Dendritic cell treated with granulocyte-macrophage colony-stimulating factor and Interleukin-4, amounts not matched to agents 40 ng/mL and 50 ng/mL, for 4 days (primary cell): ENCODE measurements at regions of chr5 and their contacts with region 1.

Region 1: DNA sequence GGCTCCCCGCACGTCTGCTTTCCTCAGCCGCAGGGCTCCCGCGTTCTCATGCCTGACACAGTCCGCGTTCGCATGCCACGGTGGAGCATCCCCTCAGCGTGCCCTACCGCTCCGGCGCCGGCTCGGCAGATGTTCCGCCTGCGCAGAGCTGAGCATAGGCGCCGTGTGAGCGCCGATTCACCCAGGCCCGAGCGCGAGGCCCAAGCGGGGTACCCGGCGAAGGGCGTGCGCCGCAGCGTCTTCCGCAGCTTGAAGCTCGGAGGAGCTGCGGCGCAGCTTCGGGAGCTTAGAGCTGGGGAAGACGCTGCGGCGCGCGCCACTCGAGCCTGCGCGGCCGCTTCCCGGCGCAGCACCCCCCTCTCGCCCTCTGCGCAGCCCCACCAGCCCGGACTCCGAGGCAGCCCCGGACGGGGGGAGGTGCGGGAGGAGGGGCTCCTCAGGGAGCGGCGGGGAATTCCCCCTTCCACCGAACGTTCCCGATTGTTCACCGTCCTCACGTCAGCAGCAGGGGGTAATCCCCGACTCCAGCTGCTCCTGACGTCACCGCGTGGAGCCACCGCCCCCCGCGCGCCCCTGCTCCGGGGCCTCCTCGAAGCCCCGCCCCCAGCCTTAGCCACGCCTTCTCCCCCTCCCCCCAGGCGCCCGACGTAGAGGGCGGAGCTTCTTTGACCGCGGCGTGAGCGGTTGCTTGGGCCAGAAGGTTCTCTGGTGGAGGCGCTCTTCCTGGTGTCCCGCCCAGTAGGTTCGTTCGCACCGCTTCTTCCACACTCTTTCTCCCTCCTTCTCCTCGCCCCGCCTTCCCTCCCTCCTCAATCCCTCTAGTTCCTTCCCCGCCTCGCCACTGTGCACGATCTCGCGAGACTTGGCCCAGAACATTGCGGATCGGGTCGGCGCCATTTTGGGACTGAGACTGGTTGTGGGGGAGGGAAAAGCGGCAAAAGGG is at the start of gene GPBP1:
- H3K4me3 Mint-ChIP-seq: peak within 1 kb of the TSS; percentile 96
- H3K27ac Mint-ChIP-seq: peak within 1 kb of the TSS; percentile 100
- H3K4me1 Mint-ChIP-seq: peaks cover 39% of the 10 kb centered on the region
- H3K27me3 Mint-ChIP-seq: no peaks in the 10 kb centered on the region

Region 2: DNA sequence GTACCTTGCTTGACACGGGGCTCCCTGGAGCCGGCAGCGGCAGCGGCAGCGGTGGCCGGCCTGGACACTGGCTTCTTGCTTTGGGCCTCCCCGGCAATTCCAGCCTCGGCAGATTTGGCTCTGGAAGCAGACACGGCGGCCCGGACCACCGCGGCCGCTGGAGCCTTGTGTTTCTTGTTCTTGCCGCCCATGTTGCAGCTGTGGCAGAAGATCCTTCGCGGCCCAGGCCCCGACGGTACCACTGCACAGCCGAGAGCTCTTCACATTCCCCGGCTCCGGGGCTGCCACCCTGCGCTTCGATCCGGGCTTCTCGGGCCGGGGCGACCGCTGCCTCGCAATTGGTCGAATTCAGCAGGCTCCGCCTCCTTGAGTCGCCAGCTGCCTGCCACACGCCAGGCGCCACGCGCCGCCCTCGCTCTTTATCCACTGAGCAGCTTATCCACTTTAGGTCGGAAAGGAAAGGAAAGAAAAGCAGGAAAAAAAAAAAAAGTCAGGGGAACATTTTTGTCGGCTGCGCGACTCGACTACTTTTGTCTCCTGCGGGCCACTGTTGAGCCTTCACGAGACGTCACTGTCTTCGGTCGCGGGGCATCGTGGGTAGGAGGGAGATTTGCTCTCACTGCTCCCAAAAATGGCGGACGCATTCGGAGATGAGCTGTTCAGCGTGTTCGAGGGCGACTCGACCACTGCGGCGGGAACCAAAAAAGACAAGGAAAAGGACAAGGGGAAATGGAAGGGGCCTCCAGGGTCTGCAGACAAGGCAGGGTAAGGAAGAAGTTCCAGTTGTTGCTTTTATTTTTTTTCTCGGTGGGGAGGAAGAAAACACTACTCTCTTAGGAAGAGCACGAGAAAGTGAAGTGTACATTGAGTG is 1865.8 kb before region 1 on chr5 and contains the starts of genes DHX29 and MTREX:
- intact Hi-C with region 1: loop called (anchors 10 kb)
- H3K4me3 Mint-ChIP-seq: no peak within 1 kb of the TSS
- H3K27ac Mint-ChIP-seq: no peak within 1 kb of the TSS
- H3K4me1 Mint-ChIP-seq: peaks cover 28% of the 10 kb centered on the region
- H3K27me3 Mint-ChIP-seq: no peaks in the 10 kb centered on the region

Region 3: GRCh38 chr5:56909294-56910209 is 263.9 kb before region 1 on chr5 and contains the start of gene SETD9:
- intact Hi-C with region 1: loop called (anchors 1 kb)
- H3K4me3 Mint-ChIP-seq: peak within 1 kb of the TSS; percentile 94
- H3K27ac Mint-ChIP-seq: peak within 1 kb of the TSS; percentile 97
- H3K4me1 Mint-ChIP-seq: peaks cover 22% of the 10 kb centered on the region
- H3K27me3 Mint-ChIP-seq: no peaks in the 10 kb centered on the region

Region 4: GRCh38 chr5:57209351-57210040 is 36.0 kb after region 1 on chr5:
- intact Hi-C with region 1: loop called (anchors 5 kb)
- H3K4me3 Mint-ChIP-seq: no peak overlapping the region
- H3K27ac Mint-ChIP-seq: no peak overlapping the region
- H3K4me1 Mint-ChIP-seq: peaks cover 49% of the 10 kb centered on the region
- H3K27me3 Mint-ChIP-seq: no peaks in the 10 kb centered on the region

Region 5: GRCh38 chr5:57442080-57442839 is 268.8 kb after region 1 on chr5:
- intact Hi-C with region 1: no loop called
- H3K4me3 Mint-ChIP-seq: no peak overlapping the region
- H3K27ac Mint-ChIP-seq: no peak overlapping the region
- H3K4me1 Mint-ChIP-seq: no peaks in the 10 kb centered on the region
- H3K27me3 Mint-ChIP-seq: no peaks in the 10 kb centered on the region